Naive thymus-derived CD4-positive, alpha-beta T cell (primary cell): ENCODE measurements at regions of chr1 and their contacts with region 1.

Region 1: DNA sequence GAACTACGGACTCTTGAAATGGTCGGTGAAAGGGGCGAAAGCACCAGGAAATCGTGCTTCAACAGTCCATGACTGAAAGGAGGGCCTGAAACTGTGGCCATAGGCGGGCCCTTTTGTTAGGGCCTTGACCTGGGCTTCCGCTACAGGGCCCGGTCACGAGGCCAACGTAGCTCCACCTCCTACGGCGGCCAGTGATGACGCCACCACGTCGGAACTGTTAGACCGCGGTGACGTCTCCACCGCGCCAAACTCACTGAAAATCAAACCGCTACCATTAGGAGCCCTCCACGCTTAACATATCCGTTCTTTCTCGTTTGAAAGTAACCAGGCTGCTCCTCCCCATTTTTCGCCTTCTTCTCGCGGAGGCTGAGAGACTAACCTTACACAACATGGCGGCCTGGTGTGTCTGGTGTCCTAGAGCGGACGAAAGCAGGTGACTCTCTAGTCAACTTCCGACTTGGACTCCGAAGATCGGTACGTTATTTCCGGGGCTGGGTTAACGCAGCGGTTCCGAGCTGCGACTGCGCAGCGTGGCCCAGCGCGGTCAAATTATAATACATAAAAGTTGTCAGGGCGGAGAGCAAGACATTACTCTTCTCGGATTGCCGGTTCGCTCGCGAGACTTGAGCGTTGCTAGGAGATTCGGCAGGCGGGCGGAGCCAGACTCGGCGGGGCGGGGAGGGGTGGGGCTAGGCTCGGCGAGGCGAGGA is 376 bp upstream of the CACYBP start:
- DNase-seq: peak; percentile 89 to 99 (median 98)
- ATAC-seq: peak; percentile 88
- H3K4me3 ChIP-seq: peak overlapping the region; percentile 72
- H3K4me3 Mint-ChIP-seq: no peak overlapping the region
- H3K27ac ChIP-seq: peak overlapping the region; percentile 99
- H3K27ac Mint-ChIP-seq: no peak overlapping the region
- H3K4me1 ChIP-seq: peaks cover 10 to 18% of the 10 kb centered on the region in 2 donors
- H3K4me1 Mint-ChIP-seq: peaks cover 34 to 43% (median 39%) of the 10 kb centered on the region in 7 donors
- H3K27me3 ChIP-seq: no peaks in the 10 kb centered on the region
- H3K27me3 Mint-ChIP-seq: no peaks in the 10 kb centered on the region

Region 2: DNA sequence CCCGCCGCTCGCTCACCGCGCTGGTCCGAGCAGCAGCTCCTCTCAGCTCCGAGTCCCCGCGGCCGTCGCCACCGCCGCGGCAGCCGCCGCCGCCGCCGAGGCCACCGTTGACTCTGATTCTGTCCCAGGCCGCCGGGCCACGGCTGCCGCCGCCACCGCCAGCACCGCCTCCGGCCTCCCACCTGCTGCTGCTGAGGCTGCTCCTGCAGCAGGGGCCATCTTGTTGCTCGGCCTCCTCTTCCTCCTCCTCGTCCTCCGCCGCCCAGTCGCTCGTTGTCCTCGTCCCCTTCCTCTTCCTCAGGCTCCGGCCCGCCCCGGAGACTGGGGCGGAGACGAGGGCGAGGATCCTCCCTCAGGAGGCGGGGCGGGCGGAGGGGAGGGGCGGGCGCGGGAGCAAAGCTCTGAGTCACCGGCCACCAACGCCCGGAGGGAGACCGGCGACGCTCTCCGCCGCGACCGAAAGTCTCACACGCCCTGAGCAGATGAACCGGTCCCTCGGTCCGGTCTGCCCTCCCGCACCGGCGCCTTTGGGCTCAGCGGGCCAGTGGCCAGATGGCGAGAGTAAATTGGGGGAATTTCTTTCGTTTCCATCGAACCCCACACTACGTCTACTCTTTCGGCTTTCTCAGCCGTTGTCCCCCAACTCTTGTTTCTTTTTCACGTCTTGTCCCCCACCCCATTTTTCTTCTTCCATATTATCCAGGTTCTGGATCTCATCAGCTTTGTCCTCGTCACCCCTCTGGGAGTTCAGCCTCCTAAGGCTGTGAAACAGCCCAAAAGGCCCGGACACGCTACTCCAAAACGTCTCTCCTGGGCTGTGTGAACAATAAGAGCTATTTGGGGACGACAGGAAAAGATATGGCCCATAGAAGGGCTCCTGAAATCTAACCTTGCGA is 977.0 kb before region 1 on chr1 and contains the start of gene RC3H1:
- CTCF ChIA-PET with region 1: no interaction called
- POLR2A ChIA-PET with region 1: interaction called, 5 read pairs
- intact Hi-C with region 1: loop called (anchors 1 kb)
- DNase-seq: peak; percentile 75 to 89 (median 83)
- ATAC-seq: peak; percentile 97
- H3K4me3 ChIP-seq: peak within 1 kb of the TSS; percentile 86
- H3K4me3 Mint-ChIP-seq: peak within 1 kb of the TSS; percentile 85 to 100 (median 98)
- H3K27ac ChIP-seq: peak within 1 kb of the TSS; percentile 94
- H3K27ac Mint-ChIP-seq: peak within 1 kb of the TSS; percentile 90 to 99 (median 98)
- H3K4me1 ChIP-seq: peaks cover 24 to 32% of the 10 kb centered on the region in 2 donors
- H3K4me1 Mint-ChIP-seq: peaks cover 19 to 52% (median 49%) of the 10 kb centered on the region in 7 donors
- H3K27me3 ChIP-seq: no peaks in the 10 kb centered on the region
- H3K27me3 Mint-ChIP-seq: peaks cover 0 to 5% (median 0%) of the 10 kb centered on the region in 5 donors
- total RNA-seq, gene RC3H1: 36.5 to 49.5 (median 47.7) TPM

Region 3: DNA sequence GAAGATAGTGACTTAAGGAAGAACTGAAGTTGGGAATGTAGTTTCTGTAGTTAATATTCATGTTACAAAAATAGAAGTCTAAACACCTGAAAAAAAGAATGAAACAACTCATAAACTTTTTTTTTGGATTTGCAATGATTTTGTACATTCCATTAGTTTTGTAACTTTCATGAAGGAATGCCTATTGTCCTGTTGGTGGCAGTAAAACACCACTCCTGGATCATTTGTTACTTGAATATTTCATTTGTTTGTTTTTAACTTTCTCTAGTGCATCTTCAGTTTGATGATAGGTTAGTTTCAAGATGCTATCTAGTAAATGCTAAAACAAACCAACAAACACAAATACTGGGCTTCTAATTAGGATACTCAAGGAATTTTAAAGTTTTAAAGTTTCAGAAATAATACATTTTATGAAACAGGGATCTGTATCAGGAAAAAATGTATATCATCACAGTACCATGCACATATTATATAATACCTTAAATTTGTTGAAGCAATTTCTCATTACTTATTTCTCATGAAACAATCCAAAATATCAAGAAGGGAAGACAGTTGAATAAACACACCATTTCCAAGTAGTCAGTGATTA is 229.3 kb before region 1 on chr1:
- CTCF ChIA-PET with region 1: interaction called, 9 read pairs
- POLR2A ChIA-PET with region 1: interaction called, 9 read pairs
- intact Hi-C with region 1: loop called (anchors 1 kb)
- DNase-seq: peak in 7 of 9 donors; percentile 19 to 58 (median 43)
- ATAC-seq: peak; percentile 68
- H3K4me3 ChIP-seq: no peak overlapping the region
- H3K4me3 Mint-ChIP-seq: no peak overlapping the region
- H3K27ac ChIP-seq: no peak overlapping the region
- H3K27ac Mint-ChIP-seq: peak overlapping the region in 1 of 9 donors; percentile 12
- H3K4me1 ChIP-seq: no peaks in the 10 kb centered on the region
- H3K4me1 Mint-ChIP-seq: peaks cover 0 to 18% (median 4%) of the 10 kb centered on the region in 7 donors
- H3K27me3 ChIP-seq: no peaks in the 10 kb centered on the region
- H3K27me3 Mint-ChIP-seq: no peaks in the 10 kb centered on the region

Region 4: DNA sequence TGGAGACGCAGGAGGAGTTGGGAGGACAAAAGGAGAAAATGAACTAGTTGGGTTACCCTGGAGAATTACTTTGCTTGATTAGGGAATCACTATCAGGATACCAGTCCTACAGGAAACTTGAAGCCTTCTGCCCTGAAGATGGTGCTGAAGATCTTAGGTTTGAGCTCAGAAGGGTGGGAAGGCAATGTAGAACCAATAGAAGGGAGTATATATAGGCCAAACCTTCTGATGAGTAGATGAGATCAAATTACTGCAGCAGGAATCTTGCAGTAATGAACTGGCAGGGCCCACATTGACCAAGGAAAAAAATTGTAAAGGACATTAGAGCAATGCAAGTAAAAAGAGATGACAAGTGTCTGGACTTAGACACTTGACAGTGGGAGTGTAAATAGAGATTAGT is 116.0 kb before region 1 on chr1:
- CTCF ChIA-PET with region 1: interaction called, 12 read pairs
- POLR2A ChIA-PET with region 1: interaction called, 13 read pairs
- intact Hi-C with region 1: loop called (anchors 1 to 2 kb)
- DNase-seq: peak in 3 of 9 donors; percentile 9 to 35 (median 27)
- ATAC-seq: peak; percentile 44
- H3K4me3 ChIP-seq: no peak overlapping the region
- H3K4me3 Mint-ChIP-seq: no peak overlapping the region
- H3K27ac ChIP-seq: no peak overlapping the region
- H3K27ac Mint-ChIP-seq: peak overlapping the region in 2 of 9 donors; percentile 22 to 46
- H3K4me1 ChIP-seq: no peaks in the 10 kb centered on the region
- H3K4me1 Mint-ChIP-seq: peaks cover 0 to 9% (median 4%) of the 10 kb centered on the region in 7 donors
- H3K27me3 ChIP-seq: no peaks in the 10 kb centered on the region
- H3K27me3 Mint-ChIP-seq: no peaks in the 10 kb centered on the region

Region 5: GRCh38 chr1:174976436-174977108 is 22.8 kb before region 1 on chr1:
- CTCF ChIA-PET with region 1: interaction called, 5 read pairs
- POLR2A ChIA-PET with region 1: interaction called, 227 read pairs
- intact Hi-C with region 1: no loop called
- DNase-seq: no peak
- ATAC-seq: no peak
- H3K4me3 ChIP-seq: no peak overlapping the region
- H3K4me3 Mint-ChIP-seq: no peak overlapping the region
- H3K27ac ChIP-seq: no peak overlapping the region
- H3K27ac Mint-ChIP-seq: peak overlapping the region in 5 of 9 donors; percentile 4 to 45 (median 22)
- H3K4me1 ChIP-seq: peaks cover 9 to 11% of the 10 kb centered on the region in 2 donors
- H3K4me1 Mint-ChIP-seq: peaks cover 22 to 69% (median 53%) of the 10 kb centered on the region in 7 donors
- H3K27me3 ChIP-seq: no peaks in the 10 kb centered on the region
- H3K27me3 Mint-ChIP-seq: no peaks in the 10 kb centered on the region

Region 6: DNA sequence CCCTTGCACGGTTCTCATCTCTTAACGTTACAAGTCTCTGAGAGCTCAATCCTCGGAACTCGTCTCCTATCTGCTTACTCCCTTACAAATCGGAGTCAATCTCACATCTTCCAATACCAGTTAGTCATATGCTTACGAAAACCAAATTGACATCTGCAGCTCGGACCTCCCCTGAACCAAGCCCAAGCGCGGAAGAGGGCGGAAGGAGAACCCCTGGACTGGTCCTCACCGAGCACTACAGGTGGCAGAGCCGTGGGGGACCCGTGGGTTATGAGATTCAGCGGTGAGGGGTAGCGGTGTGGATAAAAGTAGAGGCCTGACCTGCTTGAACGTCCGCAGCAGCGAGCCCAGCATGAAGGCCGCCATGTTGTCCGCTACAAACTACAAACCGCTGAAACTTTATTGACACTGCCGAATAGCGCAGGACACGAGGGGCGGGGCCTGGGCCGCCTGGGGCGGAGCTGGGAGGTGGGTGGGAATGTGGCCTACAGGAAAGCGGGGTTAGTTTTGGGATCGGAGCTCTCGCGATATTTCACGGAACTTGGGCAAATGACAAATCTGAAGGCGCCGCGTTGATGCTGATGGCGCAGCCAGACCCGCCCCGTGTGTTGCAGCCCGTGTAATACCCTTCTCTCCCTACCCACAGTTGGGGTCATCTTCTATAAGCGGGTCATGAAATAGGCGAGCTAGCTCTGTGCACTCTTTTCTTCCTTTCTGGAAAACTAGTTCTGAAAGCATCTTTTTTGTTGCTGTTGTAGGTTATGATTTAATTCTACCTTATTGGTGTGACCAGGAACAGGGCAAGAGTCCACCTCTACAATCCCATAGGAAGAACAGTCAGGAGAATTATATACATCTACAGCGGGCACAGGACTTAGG is 23.9 kb after region 1 on chr1 and contains the start of gene MRPS14:
- CTCF ChIA-PET with region 1: interaction called, 22 read pairs
- POLR2A ChIA-PET with region 1: interaction called, 185 read pairs
- intact Hi-C with region 1: loop called (anchors 1 kb)
- DNase-seq: peak; percentile 93 to 98 (median 97)
- ATAC-seq: peak; percentile 97
- H3K4me3 ChIP-seq: peak within 1 kb of the TSS; percentile 86
- H3K4me3 Mint-ChIP-seq: peak within 1 kb of the TSS; percentile 86 to 97 (median 92)
- H3K27ac ChIP-seq: peak within 1 kb of the TSS; percentile 92
- H3K27ac Mint-ChIP-seq: peak within 1 kb of the TSS; percentile 84 to 98 (median 90)
- H3K4me1 ChIP-seq: peaks cover 6 to 12% of the 10 kb centered on the region in 2 donors
- H3K4me1 Mint-ChIP-seq: peaks cover 23 to 47% (median 36%) of the 10 kb centered on the region in 7 donors
- H3K27me3 ChIP-seq: no peaks in the 10 kb centered on the region
- H3K27me3 Mint-ChIP-seq: no peaks in the 10 kb centered on the region
- total RNA-seq, gene MRPS14: 12.4 to 36.5 (median 31.5) TPM

Region 7: GRCh38 chr1:175132436-175132835 is 133.1 kb after region 1 on chr1:
- CTCF ChIA-PET with region 1: no interaction called
- POLR2A ChIA-PET with region 1: no interaction called
- intact Hi-C with region 1: no loop called
- DNase-seq: no peak
- ATAC-seq: no peak
- H3K4me3 ChIP-seq: no peak overlapping the region
- H3K4me3 Mint-ChIP-seq: no peak overlapping the region
- H3K27ac ChIP-seq: no peak overlapping the region
- H3K27ac Mint-ChIP-seq: no peak overlapping the region
- H3K4me1 ChIP-seq: no peaks in the 10 kb centered on the region
- H3K4me1 Mint-ChIP-seq: peaks cover 0 to 5% (median 0%) of the 10 kb centered on the region in 7 donors
- H3K27me3 ChIP-seq: no peaks in the 10 kb centered on the region
- H3K27me3 Mint-ChIP-seq: peaks cover 10 to 25% (median 25%) of the 10 kb centered on the region in 5 donors

Region 8: GRCh38 chr1:175208773-175209492 is 209.6 kb after region 1 on chr1:
- CTCF ChIA-PET with region 1: no interaction called
- POLR2A ChIA-PET with region 1: interaction called, 7 read pairs
- intact Hi-C with region 1: loop called (anchors 1 to 2 kb)
- DNase-seq: peak in 8 of 9 donors; percentile 36 to 85 (median 78)
- ATAC-seq: peak; percentile 94
- H3K4me3 ChIP-seq: peak overlapping the region; percentile 41
- H3K4me3 Mint-ChIP-seq: peak overlapping the region; percentile 71 to 96 (median 88)
- H3K27ac ChIP-seq: peak overlapping the region; percentile 62
- H3K27ac Mint-ChIP-seq: peak overlapping the region; percentile 86 to 99 (median 95)
- H3K4me1 ChIP-seq: peaks cover 55 to 70% of the 10 kb centered on the region in 2 donors
- H3K4me1 Mint-ChIP-seq: peaks cover 44 to 93% (median 76%) of the 10 kb centered on the region in 7 donors
- H3K27me3 ChIP-seq: no peaks in the 10 kb centered on the region
- H3K27me3 Mint-ChIP-seq: no peaks in the 10 kb centered on the region

Region 9: GRCh38 chr1:176325664-176326063 is 1326.3 kb after region 1 on chr1:
- CTCF ChIA-PET with region 1: no interaction called
- POLR2A ChIA-PET with region 1: no interaction called
- intact Hi-C with region 1: no loop called
- DNase-seq: no peak
- ATAC-seq: no peak
- H3K4me3 ChIP-seq: no peak overlapping the region
- H3K4me3 Mint-ChIP-seq: no peak overlapping the region
- H3K27ac ChIP-seq: no peak overlapping the region
- H3K27ac Mint-ChIP-seq: no peak overlapping the region
- H3K4me1 ChIP-seq: no peaks in the 10 kb centered on the region
- H3K4me1 Mint-ChIP-seq: no peaks in the 10 kb centered on the region
- H3K27me3 ChIP-seq: no peaks in the 10 kb centered on the region
- H3K27me3 Mint-ChIP-seq: peaks cover 0 to 23% (median 20%) of the 10 kb centered on the region in 5 donors